CD4-positive, alpha-beta memory T cell (primary cell): ENCODE measurements at regions of chr3 and their contacts with region 1.

Region 1: GRCh38 chr3:151203051-151203420 is at the start of gene GPR171:
- DNase-seq: peak; percentile 80 to 87 (median 82)
- H3K4me3 ChIP-seq: peak within 1 kb of the TSS; percentile 59 to 63
- H3K4me3 Mint-ChIP-seq: peak within 1 kb of the TSS; percentile 73 to 89 (median 86)
- H3K27ac ChIP-seq: peak within 1 kb of the TSS; percentile 75
- H3K27ac Mint-ChIP-seq: peak within 1 kb of the TSS; percentile 87 to 98 (median 97)
- H3K4me1 ChIP-seq: peaks cover 83% of the 10 kb centered on the region
- H3K4me1 Mint-ChIP-seq: peaks cover 45 to 94% (median 59%) of the 10 kb centered on the region in 4 donors
- H3K27me3 ChIP-seq: no peaks in the 10 kb centered on the region
- H3K27me3 Mint-ChIP-seq: no peaks in the 10 kb centered on the region
- total RNA-seq, gene GPR171: 116 to 129 TPM

Region 2: GRCh38 chr3:150546226-150547044 is 656.6 kb before region 1 on chr3 and contains the starts of genes EIF2A and SERP1:
- CTCF ChIA-PET with region 1: no interaction called
- POLR2A ChIA-PET with region 1: no interaction called
- intact Hi-C with region 1: loop called (anchors 5 kb)
- DNase-seq: peak; percentile 99 to 100 (median 100)
- H3K4me3 ChIP-seq: peak within 1 kb of the TSS; percentile 77 to 89
- H3K4me3 Mint-ChIP-seq: peak within 1 kb of the TSS; percentile 92 to 99 (median 97)
- H3K27ac ChIP-seq: peak within 1 kb of the TSS; percentile 99
- H3K27ac Mint-ChIP-seq: peak within 1 kb of the TSS; percentile 95 to 100 (median 99)
- H3K4me1 ChIP-seq: peaks cover 62% of the 10 kb centered on the region
- H3K4me1 Mint-ChIP-seq: peaks cover 39 to 81% (median 61%) of the 10 kb centered on the region in 4 donors
- H3K27me3 ChIP-seq: no peaks in the 10 kb centered on the region
- H3K27me3 Mint-ChIP-seq: no peaks in the 10 kb centered on the region
- total RNA-seq, gene EIF2A: 90.8 to 95.3 TPM
- total RNA-seq, gene SERP1: 122 to 128 TPM

Region 3: DNA sequence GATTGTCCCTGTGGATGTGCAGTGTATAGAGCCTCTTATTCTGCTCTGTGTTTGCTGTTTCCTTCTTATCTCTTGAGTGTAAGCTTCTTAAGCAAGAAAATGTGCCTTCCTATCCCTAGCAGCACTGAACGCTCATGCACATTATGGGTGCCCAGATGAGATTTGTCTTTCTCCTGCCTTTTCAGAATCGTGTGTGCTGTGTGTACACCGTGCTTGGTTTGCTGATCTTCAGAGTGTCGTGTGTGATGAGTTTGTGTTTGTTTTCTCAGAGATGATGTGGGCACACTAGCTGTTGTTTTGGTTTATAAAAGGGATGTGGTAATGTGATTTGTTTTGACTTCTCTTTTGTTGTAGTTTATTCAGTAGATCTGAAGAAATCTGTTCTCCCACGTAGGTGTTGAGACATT is 19.8 kb before region 1 on chr3:
- CTCF ChIA-PET with region 1: interaction called, 8 read pairs
- POLR2A ChIA-PET with region 1: interaction called, 118 read pairs
- intact Hi-C with region 1: loop called (anchors 1 kb)
- DNase-seq: peak; percentile 32 to 61 (median 40)
- H3K4me3 ChIP-seq: peak overlapping the region in 1 of 2 donors; percentile 33
- H3K4me3 Mint-ChIP-seq: peak overlapping the region; percentile 27 to 84 (median 76)
- H3K27ac ChIP-seq: no peak overlapping the region
- H3K27ac Mint-ChIP-seq: peak overlapping the region; percentile 1 to 94 (median 91)
- H3K4me1 ChIP-seq: peaks cover 27% of the 10 kb centered on the region
- H3K4me1 Mint-ChIP-seq: peaks cover 23 to 32% (median 25%) of the 10 kb centered on the region in 4 donors
- H3K27me3 ChIP-seq: no peaks in the 10 kb centered on the region
- H3K27me3 Mint-ChIP-seq: no peaks in the 10 kb centered on the region

Region 4: DNA sequence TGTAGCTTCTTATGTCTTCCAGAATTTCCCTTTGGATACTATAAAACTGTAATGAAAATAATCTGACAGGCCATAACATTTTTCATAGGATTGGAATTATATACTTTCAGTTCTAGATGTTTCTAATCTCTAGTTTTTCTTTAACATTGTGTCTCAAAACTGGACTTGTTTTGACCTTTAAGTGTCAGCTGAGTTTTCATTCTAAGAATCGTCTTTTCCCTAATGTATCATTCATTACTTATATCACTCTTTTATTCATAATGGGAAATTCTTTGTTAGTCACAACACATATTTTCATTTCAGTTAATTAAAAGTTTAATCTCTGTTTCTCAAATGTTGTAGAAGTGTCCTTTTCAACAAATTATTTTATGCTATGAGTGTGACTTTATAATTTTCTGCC is 11.9 kb before region 1 on chr3:
- CTCF ChIA-PET with region 1: interaction called, 12 read pairs
- POLR2A ChIA-PET with region 1: interaction called, 118 read pairs
- intact Hi-C with region 1: no loop called
- DNase-seq: no peak
- H3K4me3 ChIP-seq: no peak overlapping the region
- H3K4me3 Mint-ChIP-seq: no peak overlapping the region
- H3K27ac ChIP-seq: no peak overlapping the region
- H3K27ac Mint-ChIP-seq: no peak overlapping the region
- H3K4me1 ChIP-seq: peaks cover 4% of the 10 kb centered on the region
- H3K4me1 Mint-ChIP-seq: peaks cover 12 to 17% (median 14%) of the 10 kb centered on the region in 4 donors
- H3K27me3 ChIP-seq: no peaks in the 10 kb centered on the region
- H3K27me3 Mint-ChIP-seq: no peaks in the 10 kb centered on the region

Region 5: DNA sequence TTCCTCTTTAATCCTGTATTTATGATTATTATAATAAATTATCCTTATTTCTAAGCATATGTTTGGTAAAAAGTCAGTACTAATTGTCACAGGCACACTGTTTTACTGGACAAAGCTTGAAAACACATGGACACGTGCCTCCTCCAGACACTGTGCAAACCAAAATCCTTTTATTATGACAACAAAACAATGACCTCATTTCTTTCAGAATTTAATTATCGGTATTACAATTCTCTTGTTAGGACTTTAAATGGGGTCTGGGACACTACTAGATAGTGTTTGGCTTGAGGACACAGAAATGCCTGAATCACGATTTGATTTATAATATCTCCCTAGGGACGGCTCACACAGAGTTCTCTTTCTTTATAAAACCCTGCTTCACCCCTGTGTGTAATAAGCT is 365.1 kb after region 1 on chr3:
- CTCF ChIA-PET with region 1: no interaction called
- POLR2A ChIA-PET with region 1: no interaction called
- intact Hi-C with region 1: no loop called
- DNase-seq: no peak
- H3K4me3 ChIP-seq: no peak overlapping the region
- H3K4me3 Mint-ChIP-seq: no peak overlapping the region
- H3K27ac ChIP-seq: no peak overlapping the region
- H3K27ac Mint-ChIP-seq: no peak overlapping the region
- H3K4me1 ChIP-seq: no peaks in the 10 kb centered on the region
- H3K4me1 Mint-ChIP-seq: no peaks in the 10 kb centered on the region
- H3K27me3 ChIP-seq: no peaks in the 10 kb centered on the region
- H3K27me3 Mint-ChIP-seq: peaks cover 2 to 3% of the 10 kb centered on the region in 2 donors